B cell (primary cell): ENCODE measurements at regions of chr19 and their contacts with region 1.

Region 1: DNA sequence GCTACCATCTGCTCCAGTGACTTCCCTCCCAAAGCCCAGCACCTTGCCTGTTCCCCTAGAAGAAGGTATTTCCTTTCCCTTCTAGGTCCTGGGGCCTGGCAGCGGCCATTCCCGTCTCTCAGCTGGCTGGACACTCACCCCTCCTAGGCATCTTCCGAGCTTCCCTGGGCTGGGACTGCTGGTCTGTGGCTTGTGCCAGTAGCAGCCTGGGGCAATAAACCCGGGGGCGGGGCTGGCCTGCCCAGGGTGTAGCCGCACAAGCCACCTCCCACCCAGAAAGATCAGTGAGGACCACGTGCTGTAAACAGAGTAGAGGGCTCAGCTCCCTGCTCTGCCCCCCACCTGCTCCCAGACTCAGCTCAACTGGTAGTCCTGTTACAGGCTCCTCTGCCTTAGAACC is 15.0 kb downstream of the LIPE start:
- DNase-seq: no peak
- ATAC-seq: no peak
- H3K4me3 ChIP-seq: no peak overlapping the region
- H3K4me3 Mint-ChIP-seq: no peak overlapping the region
- H3K27ac ChIP-seq: no peak overlapping the region
- H3K27ac Mint-ChIP-seq: no peak overlapping the region
- H3K4me1 ChIP-seq: no peaks in the 10 kb centered on the region
- H3K4me1 Mint-ChIP-seq: peaks cover 3% of the 10 kb centered on the region
- H3K27me3 ChIP-seq: no peaks in the 10 kb centered on the region
- H3K27me3 Mint-ChIP-seq: no peaks in the 10 kb centered on the region
- CTCF ChIP-seq: no peak

Region 2: GRCh38 chr19:42433503-42434260 is 21.5 kb after region 1 on chr19:
- CTCF ChIA-PET with region 1: interaction called, 11 read pairs
- POLR2A ChIA-PET with region 1: no interaction called
- intact Hi-C with region 1: no loop called
- DNase-seq: peak; percentile 65
- ATAC-seq: peak; percentile 75
- H3K4me3 ChIP-seq: no peak overlapping the region
- H3K4me3 Mint-ChIP-seq: no peak overlapping the region
- H3K27ac ChIP-seq: no peak overlapping the region
- H3K27ac Mint-ChIP-seq: no peak overlapping the region
- H3K4me1 ChIP-seq: peaks cover 0 to 4% of the 10 kb centered on the region in 2 donors
- H3K4me1 Mint-ChIP-seq: peaks cover 6% of the 10 kb centered on the region
- H3K27me3 ChIP-seq: peaks cover 0 to under 1% (median 0%) of the 10 kb centered on the region in 4 experiments
- H3K27me3 Mint-ChIP-seq: no peaks in the 10 kb centered on the region
- CTCF ChIP-seq: peak; percentile 81